Astrocyte of the cerebellum (primary cell): ENCODE measurements at regions of chrX and their contacts with region 1.

Region 1: DNA sequence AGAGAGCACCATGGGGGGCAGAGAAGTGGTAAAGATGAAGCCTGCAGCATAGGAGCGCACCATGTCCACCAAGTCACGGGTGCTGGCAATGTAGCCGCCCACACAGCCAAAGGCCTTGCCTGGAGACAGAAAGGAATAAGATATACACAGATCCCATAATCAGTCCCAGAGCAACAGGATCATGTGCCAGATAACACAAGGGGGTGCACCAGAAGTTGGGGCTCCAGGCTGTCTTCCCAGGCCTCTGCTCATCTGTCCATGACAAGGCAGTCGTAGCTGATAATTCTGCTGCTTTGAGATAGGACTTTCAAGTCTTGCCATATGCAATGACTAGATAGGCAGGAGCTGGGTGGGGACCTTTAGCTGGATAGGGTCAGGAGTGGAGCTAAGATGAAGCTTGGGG is 14.7 kb downstream of the APEX2 start:
- DNase-seq: no peak
- H3K4me3 ChIP-seq: no peak overlapping the region
- CTCF ChIP-seq: no peak

Region 2: DNA sequence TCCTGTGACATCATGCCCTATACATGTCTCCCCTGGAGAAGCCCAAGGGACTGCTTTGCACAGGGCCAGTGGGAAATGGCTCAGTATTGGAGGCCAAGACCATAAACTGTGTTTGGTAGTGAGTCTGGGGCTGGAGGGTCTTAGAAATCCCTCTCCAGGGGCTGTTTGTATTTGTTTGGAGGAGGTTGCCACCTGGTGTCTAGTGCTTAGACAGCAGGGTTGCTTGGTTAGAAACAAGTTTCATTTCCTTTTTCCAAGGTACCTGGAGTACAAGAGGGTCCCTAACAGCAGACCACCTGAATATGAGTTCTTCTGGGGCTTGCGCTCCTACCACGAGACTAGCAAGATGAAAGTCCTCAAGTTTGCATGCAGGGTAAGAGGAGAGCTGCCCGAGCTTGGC is 87.5 kb before region 1 on chrX:
- in situ Hi-C with region 1: loop called (anchors 5 kb)
- DNase-seq: no peak
- H3K4me3 ChIP-seq: no peak overlapping the region
- CTCF ChIP-seq: no peak

Region 3: DNA sequence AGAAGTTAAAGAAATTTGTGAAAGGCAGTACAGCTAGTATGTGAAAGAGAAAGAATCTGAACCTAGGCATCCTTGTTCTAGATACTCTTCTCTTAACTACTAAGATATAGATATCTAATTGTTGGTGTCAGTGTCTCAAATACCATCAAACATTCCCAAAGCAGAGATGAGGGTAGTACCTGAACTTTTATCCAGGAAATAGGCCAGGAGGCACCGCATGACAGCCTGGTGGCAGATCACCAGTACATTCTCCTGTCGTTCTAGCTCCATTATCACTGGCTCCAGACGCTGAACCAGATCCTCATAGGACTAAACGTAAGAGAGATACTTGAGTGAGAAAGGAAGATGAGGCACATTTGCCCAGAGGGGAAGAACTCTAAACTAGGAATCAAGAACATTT is 77.5 kb before region 1 on chrX:
- in situ Hi-C with region 1: no loop called
- DNase-seq: no peak
- H3K4me3 ChIP-seq: no peak overlapping the region
- CTCF ChIP-seq: no peak

Region 4: DNA sequence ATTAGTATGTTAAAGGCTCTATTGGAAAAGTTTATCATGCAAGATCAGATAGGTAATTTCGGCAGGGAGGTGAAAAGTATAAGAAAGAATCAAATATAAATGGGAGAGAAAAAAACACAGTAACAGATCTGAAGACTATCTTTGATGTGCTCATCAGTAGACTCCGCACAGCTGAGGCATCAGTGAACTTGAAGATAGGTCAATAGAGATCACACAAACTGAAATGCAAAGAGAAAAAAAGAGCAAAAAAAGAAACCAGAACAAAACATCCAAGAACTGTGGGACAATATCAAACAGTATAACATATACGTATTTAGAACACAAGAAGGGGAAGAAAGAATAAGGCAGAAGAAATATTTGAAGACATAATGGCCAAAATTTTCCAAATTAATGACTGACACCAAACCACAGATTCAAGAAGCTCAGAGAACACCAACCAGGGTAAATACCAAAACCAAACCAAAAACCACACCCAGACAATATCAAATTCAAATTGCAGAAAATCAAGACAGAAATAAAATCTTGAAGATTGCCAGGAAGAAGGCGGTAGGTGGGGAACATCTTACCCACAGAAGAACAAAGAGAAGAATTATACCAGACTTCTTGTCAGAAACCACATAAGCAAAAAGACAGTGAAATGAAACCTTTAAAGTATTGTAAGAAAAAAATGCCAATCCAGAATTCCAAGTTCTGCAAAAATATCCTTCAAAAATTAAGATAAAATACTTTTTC is 50.0 kb before region 1 on chrX:
- in situ Hi-C with region 1: no loop called
- DNase-seq: no peak
- H3K4me3 ChIP-seq: no peak overlapping the region
- CTCF ChIP-seq: no peak

Region 5: DNA sequence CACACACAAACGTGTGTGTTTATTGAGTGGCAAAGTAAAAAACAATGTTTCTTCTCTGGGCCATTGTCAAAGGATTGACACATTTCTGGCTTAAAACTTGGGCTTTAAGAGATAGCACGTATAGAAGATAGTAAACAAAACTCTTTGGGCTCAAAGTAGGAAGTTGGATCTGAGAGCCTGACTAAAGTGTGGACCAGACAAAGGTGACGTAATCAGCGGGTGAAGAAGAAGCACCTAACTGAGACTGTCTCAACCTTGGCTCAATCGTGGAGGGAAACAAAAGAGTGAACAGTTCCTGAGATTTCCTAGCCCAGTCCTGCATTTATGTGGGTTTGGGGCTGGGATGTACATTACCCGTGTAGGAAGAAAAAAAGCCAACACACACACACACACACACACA is 34.6 kb before region 1 on chrX:
- in situ Hi-C with region 1: no loop called
- DNase-seq: no peak
- H3K4me3 ChIP-seq: no peak overlapping the region
- CTCF ChIP-seq: no peak

Region 6: GRCh38 chrX:55057675-55058249 is 42.9 kb after region 1 on chrX:
- in situ Hi-C with region 1: no loop called
- DNase-seq: peak; percentile 3
- H3K4me3 ChIP-seq: no peak overlapping the region
- CTCF ChIP-seq: peak; percentile 69